PC-3 (cell line): ENCODE measurements at regions of chr10 and their contacts with region 1.

Region 1: DNA sequence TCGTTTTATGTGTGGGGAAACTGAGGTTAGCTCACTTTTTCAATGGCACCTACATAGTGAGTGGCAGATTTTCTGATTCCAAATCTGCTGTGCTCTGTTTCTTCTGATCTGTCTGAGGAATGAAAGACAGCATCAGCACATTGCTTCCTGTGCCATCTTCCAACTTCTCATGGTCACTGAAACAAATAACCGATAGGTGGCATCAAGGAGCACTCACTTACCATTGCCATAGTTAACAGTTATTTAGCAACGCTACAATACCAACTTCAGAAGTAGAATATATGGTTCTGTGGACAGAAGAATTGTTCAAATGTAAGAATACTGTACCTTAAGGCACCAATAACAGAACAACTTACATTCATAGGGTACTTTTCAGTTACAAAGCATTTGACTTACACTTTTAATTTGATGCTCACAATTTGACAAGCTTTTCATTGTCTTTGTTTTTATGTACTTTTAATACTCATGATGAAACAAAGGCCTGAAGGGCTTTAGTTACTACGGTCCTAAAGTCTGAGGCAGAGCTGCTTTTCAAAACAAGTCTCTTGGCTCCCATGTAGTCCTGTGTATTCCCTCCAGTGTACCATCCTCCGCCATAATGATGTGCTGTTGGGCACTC is 228.9 kb upstream of the TCF7L2 start:
- DNase-seq: peak; percentile 69
- ATAC-seq: peak; percentile 37; the same call in 1 of the 2 replicates
- H3K4me3 ChIP-seq: no peak overlapping the region
- H3K27ac ChIP-seq: no peak overlapping the region
- H3K4me1 ChIP-seq: peaks cover 18% of the 10 kb centered on the region
- H3K27me3 ChIP-seq: no peaks in the 10 kb centered on the region
- CTCF ChIP-seq: peak; percentile 69

Region 2: DNA sequence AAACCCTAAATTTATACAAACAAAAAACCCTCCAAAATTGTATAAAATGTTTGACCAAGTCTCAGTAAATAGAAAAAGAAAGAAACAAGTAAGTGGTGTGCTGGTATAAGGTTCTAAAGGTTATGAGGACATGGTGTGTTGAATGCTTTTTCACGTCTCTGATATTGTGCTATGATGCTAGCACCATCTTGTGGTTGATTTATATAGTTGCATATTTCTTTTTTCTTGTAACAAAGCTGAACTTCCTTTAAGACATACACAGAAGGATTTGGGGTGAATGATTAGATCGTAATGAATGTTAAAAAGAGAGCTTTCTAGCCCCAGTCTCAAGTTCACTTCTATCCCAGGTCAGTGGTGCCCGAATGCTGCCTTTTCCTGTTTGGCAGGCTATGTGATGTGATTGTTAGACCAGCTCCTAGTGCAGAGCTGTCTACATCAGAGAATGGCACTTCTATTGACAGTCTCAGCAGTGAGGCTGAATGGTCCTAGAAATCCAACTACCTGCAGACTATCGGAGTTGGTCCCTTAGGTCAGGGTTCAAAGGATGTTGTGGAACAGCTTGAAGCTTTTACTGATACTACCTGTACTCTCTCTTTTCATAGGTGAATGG is 249.2 kb before region 1 on chr10:
- CTCF ChIA-PET with region 1: no interaction called
- POLR2A ChIA-PET with region 1: no interaction called
- intact Hi-C with region 1: loop called (anchors 10 kb)
- DNase-seq: peak; percentile 48
- ATAC-seq: peak; percentile 57
- H3K4me3 ChIP-seq: no peak overlapping the region
- H3K27ac ChIP-seq: no peak overlapping the region
- H3K4me1 ChIP-seq: 0 out of 2 replicates have a peak, but pooled peaks cover 7% of the 10 kb centered on the region
- H3K27me3 ChIP-seq: no peaks in the 10 kb centered on the region
- CTCF ChIP-seq: peak; percentile 80

Region 3: DNA sequence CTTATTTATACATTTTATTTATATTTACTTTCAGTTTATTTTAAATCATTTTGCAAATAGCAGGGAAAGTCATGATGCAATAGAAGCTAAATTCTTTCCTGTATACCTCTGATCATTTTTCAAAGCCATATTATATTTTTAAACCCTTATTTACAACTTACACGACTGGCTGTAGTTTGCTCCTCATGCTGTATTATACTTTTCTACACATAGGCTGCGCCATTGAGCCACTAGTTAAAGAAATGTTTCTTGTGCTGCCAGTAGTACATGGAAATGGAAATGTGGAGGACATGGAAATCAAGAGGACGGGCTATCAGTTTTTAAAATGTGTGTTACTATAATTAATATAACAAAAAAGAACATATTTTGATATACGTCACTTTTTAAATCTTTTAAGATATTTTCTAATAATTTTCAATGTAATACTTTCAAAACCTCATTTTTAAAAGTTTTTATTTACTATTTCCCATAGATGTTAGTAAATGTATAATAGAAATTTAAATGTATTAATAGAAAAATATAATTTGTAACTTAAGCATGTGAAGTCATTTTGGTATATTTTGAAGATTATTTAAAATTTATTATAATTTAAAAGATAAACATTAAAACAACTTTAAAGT is 155.6 kb before region 1 on chr10:
- CTCF ChIA-PET with region 1: no interaction called
- POLR2A ChIA-PET with region 1: no interaction called
- intact Hi-C with region 1: loop called (anchors 2 kb)
- DNase-seq: peak; percentile 83
- ATAC-seq: peak; percentile 54
- H3K4me3 ChIP-seq: no peak overlapping the region
- H3K27ac ChIP-seq: no peak overlapping the region
- H3K4me1 ChIP-seq: peaks cover 21% of the 10 kb centered on the region
- H3K27me3 ChIP-seq: no peaks in the 10 kb centered on the region
- CTCF ChIP-seq: peak; percentile 65

Region 4: DNA sequence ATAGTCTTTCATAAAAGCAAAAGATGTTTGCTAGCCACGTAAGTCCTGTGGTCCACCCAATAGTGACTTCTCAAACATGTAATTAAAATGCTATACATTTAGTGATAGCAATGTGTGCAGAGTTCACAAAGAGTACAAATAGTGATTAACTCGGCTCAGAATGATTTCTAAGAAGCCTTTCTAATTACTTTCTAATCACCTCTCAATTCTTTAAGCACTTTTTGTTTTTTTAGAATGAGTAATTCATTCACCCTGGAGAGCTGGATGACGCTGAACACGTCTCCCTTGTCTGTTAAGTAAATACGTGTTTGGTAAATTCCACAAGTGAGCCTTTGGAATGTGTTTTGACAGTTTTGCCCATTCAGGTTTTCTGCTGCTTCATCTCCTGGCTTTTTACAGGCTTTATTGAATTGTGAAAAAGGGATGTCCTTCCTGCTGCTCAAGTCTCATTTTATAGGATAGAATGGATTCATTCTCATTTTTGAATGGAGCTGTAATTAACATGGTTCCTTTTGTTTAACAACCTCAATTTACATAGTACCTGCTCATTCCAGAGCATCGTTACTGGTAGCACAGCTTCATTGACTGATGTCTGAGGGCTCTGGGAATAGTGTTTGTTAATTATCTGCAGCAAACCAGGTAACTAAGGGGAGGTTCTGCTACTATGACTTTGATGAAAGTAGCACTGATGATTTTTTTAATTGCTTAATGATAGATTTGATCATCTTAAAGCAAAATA is 62.1 kb before region 1 on chr10:
- CTCF ChIA-PET with region 1: no interaction called
- POLR2A ChIA-PET with region 1: no interaction called
- intact Hi-C with region 1: loop called (anchors 10 kb)
- DNase-seq: peak; percentile 80
- ATAC-seq: peak; percentile 73
- H3K4me3 ChIP-seq: peak overlapping the region; percentile 40; the same call in 1 of the 2 replicates
- H3K27ac ChIP-seq: peak overlapping the region; percentile 90
- H3K4me1 ChIP-seq: peaks cover 43% of the 10 kb centered on the region
- H3K27me3 ChIP-seq: no peaks in the 10 kb centered on the region
- CTCF ChIP-seq: no peak

Region 5: GRCh38 chr10:113093188-113094113 is 372.3 kb after region 1 on chr10:
- CTCF ChIA-PET with region 1: no interaction called
- POLR2A ChIA-PET with region 1: no interaction called
- intact Hi-C with region 1: loop called (anchors 10 kb)
- DNase-seq: peak; percentile 93
- ATAC-seq: peak; percentile 74
- H3K4me3 ChIP-seq: peak overlapping the region; percentile 46
- H3K27ac ChIP-seq: peak overlapping the region; percentile 98
- H3K4me1 ChIP-seq: peaks cover 46% of the 10 kb centered on the region
- H3K27me3 ChIP-seq: no peaks in the 10 kb centered on the region
- CTCF ChIP-seq: no peak